IMR-90 (cell line): ENCODE measurements at regions of chr13 and their contacts with region 1.

Region 1: GRCh38 chr13:103451656-103452055 is 385.4 kb upstream of the SLC10A2 start:
- DNase-seq: no peak
- ATAC-seq: no peak
- H3K4me3 ChIP-seq: no peak overlapping the region
- H3K27ac ChIP-seq: no peak overlapping the region
- H3K4me1 ChIP-seq: no peaks in the 10 kb centered on the region
- H3K27me3 ChIP-seq: no peaks in the 10 kb centered on the region
- CTCF ChIP-seq: no peak
- POLR2A ChIP-seq: no peak
- RAD21 ChIP-seq: no peak

Region 2: DNA sequence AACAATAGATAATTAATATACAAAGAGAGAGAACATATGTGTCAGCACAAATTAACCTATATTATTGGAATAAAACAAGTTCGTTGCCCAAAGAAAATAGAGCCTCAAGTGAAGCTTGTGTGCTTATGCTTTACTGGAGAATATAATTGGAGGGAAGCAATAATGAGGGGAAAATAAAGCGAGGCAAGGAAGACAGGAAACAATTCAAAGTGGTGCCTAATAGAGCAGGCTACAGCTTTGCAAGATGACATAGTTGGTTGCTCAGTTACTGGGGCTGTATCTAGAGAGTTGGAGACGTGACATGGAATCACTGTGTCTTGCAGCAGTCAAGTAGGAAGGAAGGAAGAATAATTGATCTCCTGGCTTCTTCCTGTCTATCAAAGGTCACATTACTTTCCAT is 364.4 kb before region 1 on chr13:
- CTCF ChIA-PET with region 1: no interaction called
- POLR2A ChIA-PET with region 1: no interaction called
- dilution Hi-C with region 1: no loop called
- in situ Hi-C with region 1: no loop called
- intact Hi-C with region 1: loop called (anchors 5 kb)
- DNase-seq: no peak
- ATAC-seq: no peak
- H3K4me3 ChIP-seq: no peak overlapping the region
- H3K27ac ChIP-seq: no peak overlapping the region
- H3K4me1 ChIP-seq: no peaks in the 10 kb centered on the region
- H3K27me3 ChIP-seq: no peaks in the 10 kb centered on the region
- CTCF ChIP-seq: no peak
- POLR2A ChIP-seq: no peak
- RAD21 ChIP-seq: no peak

Region 3: GRCh38 chr13:103730414-103730813 is 278.8 kb after region 1 on chr13:
- CTCF ChIA-PET with region 1: no interaction called
- POLR2A ChIA-PET with region 1: no interaction called
- dilution Hi-C with region 1: no loop called
- in situ Hi-C with region 1: no loop called
- intact Hi-C with region 1: no loop called
- DNase-seq: no peak
- ATAC-seq: no peak
- H3K4me3 ChIP-seq: no peak overlapping the region
- H3K27ac ChIP-seq: no peak overlapping the region
- H3K4me1 ChIP-seq: no peaks in the 10 kb centered on the region
- H3K27me3 ChIP-seq: no peaks in the 10 kb centered on the region
- CTCF ChIP-seq: no peak
- POLR2A ChIP-seq: no peak
- RAD21 ChIP-seq: no peak